ENCODE measurements at regions of chr5 and their contacts with region 1.

Region 1: DNA sequence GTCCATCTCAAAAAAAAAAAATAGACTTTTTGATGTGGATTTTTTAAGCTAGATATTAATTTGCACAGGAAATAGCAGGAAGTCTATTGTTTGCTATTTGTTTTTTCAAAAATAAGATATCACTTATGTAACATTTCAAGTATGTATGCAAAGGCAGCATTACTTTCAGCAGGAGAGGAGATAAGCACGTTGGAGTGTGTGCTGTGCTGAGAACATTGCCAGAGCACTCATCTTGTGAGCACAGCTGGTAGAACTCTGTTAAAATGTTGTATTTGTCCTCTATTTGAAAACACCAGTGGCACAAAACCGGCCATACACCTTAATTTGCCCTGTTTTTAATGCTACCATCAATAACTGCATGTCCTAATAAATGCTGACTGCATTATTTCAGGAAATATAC is 1061.9 kb upstream of the CDH18 start:
- DNase-seq: no peak
- H3K4me3 ChIP-seq: no peak overlapping the region
- CTCF ChIP-seq: no peak
- POLR2A ChIP-seq: no peak

Region 2: GRCh38 chr5:19701791-19702190 is 1348.1 kb before region 1 on chr5:
- intact Hi-C with region 1: loop called (anchors 10 kb)
- DNase-seq: no peak
- H3K4me3 ChIP-seq: no peak overlapping the region
- CTCF ChIP-seq: no peak
- POLR2A ChIP-seq: no peak

Region 3: GRCh38 chr5:20959347-20959746 is 90.6 kb before region 1 on chr5:
- intact Hi-C with region 1: no loop called
- DNase-seq: no peak
- H3K4me3 ChIP-seq: no peak overlapping the region
- CTCF ChIP-seq: no peak
- POLR2A ChIP-seq: no peak

Region 4: GRCh38 chr5:21070858-21071257 is 21.0 kb after region 1 on chr5:
- intact Hi-C with region 1: no loop called
- DNase-seq: no peak
- H3K4me3 ChIP-seq: no peak overlapping the region
- CTCF ChIP-seq: no peak
- POLR2A ChIP-seq: no peak

Measured in lower leg skin (tissue), 4 donors.